ACHN (cell line): ENCODE measurements at regions of chr6 and their contacts with region 1.

Region 1: DNA sequence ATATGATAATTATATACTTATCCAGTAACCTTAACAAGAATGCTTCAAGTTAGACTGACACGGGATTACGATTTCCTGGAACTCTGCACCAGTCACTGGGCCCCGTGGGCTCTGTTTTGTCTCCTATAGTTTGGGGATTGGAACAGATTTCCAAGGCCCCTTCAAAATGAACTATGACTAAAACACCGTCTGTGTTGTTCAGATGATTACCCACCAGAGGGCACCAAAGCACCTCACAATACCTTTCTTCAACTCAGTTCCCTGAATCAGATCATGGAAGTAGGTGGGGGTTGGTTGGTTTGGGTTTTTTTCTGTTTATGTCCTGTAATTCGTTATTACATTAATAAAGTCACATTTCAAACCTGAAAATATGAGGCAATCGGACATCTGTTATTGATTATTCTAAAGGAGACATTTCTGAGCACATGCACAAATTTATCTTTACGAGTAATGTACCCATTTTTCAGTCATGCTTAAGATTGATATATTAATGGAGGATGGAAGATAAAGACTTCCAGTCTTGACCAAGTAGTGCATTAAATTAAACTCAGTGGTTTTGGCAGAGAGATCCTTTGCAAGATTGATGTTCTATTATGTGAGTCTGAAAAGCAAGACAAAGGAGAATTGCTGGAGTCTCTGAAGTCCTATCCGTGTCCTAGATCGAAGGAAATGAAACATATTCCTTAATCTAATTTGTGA is 112.0 kb upstream of the COL21A1 start:
- DNase-seq: peak; percentile 72

Region 2: DNA sequence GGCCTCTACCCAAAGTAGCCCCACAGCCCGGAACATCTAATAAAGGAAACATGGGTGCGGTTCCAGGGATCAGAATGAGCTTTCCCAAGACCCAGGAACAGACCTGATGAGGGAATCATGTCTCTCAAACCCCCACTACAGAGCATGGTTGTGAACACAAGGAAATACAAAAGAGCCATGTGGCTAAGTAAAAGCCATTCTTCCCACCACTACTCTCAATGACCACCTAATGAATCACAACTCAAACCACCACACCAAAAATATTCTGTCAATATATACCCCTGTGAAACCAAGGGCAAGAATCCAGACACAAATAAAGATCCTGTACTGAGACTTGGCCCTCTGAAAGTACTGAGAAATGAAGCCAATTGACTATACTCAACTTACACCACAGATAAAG is 91.1 kb before region 1 on chr6:
- in situ Hi-C with region 1: no loop called
- DNase-seq: no peak

Region 3: DNA sequence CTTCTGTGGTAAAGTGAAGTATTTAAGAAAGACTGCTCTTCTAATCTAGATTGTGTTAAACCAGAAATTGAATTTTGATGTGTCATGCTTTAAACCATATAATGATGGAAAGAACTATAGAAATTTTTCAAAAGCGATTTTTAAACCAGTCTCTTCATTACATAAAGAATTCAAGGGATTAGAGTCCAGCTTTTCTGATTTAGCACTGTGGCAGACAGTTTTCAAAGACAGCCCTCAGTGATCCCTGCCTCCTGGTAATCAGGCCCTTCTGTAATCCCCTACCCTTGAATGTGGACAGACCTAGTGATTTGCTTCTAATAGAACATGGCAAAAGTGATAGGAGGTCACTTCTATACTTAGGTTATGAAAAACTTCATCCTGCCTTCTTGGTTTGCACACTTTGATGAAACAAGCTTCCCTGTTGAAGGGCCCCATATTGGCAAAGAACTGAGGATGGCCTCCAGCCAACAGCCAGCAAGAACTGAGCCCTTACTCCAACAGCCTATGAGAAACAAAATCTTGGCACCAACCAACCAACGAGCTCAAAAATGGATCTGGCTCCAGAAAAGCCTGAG is 91.9 kb after region 1 on chr6:
- in situ Hi-C with region 1: loop called (anchors 25 kb)
- DNase-seq: no peak

Region 4: GRCh38 chr6:56570413-56571359 is 211.3 kb after region 1 on chr6:
- in situ Hi-C with region 1: loop called (anchors 25 kb)
- DNase-seq: peak; percentile 35

Region 5: DNA sequence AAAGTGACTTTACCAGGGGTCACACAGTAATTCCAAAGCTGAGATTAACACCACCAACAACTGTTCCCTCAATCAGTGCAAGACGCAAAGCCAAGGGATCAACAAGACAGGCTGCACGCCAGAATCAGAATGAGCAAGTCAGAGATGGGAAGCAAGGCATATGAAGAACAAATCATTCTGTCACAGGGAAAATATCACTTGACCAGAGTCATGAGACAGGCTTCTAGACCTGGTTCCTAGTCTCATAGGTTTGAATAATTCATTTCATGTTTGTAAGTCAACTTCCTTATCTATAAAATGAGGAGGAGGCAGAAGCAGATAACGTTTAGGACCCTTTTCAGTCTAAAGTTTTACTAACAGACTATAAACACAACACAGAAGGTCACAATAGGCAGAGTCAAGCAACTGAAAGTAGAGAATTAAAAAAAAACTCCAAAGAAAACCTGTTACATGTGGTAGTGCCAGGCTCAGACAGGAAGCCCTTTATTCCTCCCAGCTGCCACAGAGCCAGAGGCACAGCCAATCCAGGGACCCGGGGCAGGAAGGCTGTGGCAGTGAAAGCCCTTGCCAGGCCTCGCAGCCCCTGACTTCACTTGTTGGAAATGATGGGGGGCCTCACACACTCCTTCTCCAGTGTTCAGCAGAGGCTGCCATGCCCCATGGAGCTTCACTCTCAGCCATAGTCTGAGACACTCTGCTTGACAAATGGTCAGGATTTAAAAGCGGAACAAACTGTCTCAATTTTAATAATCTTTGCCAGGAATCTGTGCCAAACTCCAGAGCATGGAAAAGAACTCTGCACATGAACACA is 312.5 kb after region 1 on chr6:
- in situ Hi-C with region 1: no loop called
- DNase-seq: no peak